Adrenal gland (tissue), 19 donors: ENCODE measurements at regions of chr2 and their contacts with region 1.

Region 1: DNA sequence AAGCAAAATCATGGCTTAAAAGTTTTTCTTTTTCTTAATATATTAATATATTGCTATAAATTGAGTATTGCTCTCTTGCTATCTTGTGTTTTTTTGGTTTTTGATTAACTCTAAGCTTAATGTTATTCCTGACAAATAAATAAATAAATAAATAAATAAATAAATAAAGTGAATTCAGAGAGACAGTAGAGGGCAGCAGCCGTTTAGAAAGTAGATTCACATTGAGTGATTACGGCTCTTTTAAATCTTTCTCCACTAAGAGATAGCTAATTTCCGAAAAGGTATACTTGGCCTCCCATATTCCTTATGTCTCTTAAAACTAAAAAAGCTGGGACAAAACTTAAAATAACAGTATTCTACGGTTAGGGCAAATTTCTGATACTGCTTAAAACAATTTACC is 34.3 kb downstream of the MSH2 start:
- DNase-seq: peak in 2 of 7 donors; percentile 18 to 27
- H3K4me3 ChIP-seq: no peak overlapping the region
- H3K27ac ChIP-seq: no peak overlapping the region
- H3K4me1 ChIP-seq: no peaks in the 10 kb centered on the region
- H3K27me3 ChIP-seq: no peaks in the 10 kb centered on the region
- CTCF ChIP-seq: peak; percentile 32 to 75 (median 50)
- POLR2A ChIP-seq: no peak

Region 2: GRCh38 chr2:47076586-47077441 is 360.5 kb before region 1 on chr2:
- intact Hi-C with region 1: no loop called
- DNase-seq: peak in 2 of 7 donors; percentile 43 to 67
- H3K4me3 ChIP-seq: no peak overlapping the region
- H3K27ac ChIP-seq: peak overlapping the region in 2 of 5 donors; percentile 72 to 86
- H3K4me1 ChIP-seq: peaks cover 6 to 75% of the 10 kb centered on the region in 2 donors
- H3K27me3 ChIP-seq: no peaks in the 10 kb centered on the region
- CTCF ChIP-seq: no peak
- POLR2A ChIP-seq: no peak

Region 3: GRCh38 chr2:47767880-47768609 is 330.8 kb after region 1 on chr2:
- intact Hi-C with region 1: loop called (anchors 2 to 5 kb)
- DNase-seq: peak; percentile 42 to 82 (median 67)
- H3K4me3 ChIP-seq: no peak overlapping the region
- H3K27ac ChIP-seq: no peak overlapping the region
- H3K4me1 ChIP-seq: peaks cover 0 to 7% of the 10 kb centered on the region in 2 donors
- H3K27me3 ChIP-seq: no peaks in the 10 kb centered on the region
- CTCF ChIP-seq: peak; percentile 92 to 100 (median 97)
- POLR2A ChIP-seq: no peak